ENCODE measurements at regions of chr1 and their contacts with region 1.

Region 1: GRCh38 chr1:244302889-244303613 is 148.7 kb downstream of the ADSS2 start:
- DNase-seq: no peak
- ATAC-seq: no peak
- H3K4me3 Mint-ChIP-seq: no peak overlapping the region
- H3K27ac Mint-ChIP-seq: no peak overlapping the region
- H3K4me1 Mint-ChIP-seq: peaks cover 19% of the 10 kb centered on the region
- H3K27me3 Mint-ChIP-seq: no peaks in the 10 kb centered on the region
- CTCF ChIP-seq: no peak

Region 2: DNA sequence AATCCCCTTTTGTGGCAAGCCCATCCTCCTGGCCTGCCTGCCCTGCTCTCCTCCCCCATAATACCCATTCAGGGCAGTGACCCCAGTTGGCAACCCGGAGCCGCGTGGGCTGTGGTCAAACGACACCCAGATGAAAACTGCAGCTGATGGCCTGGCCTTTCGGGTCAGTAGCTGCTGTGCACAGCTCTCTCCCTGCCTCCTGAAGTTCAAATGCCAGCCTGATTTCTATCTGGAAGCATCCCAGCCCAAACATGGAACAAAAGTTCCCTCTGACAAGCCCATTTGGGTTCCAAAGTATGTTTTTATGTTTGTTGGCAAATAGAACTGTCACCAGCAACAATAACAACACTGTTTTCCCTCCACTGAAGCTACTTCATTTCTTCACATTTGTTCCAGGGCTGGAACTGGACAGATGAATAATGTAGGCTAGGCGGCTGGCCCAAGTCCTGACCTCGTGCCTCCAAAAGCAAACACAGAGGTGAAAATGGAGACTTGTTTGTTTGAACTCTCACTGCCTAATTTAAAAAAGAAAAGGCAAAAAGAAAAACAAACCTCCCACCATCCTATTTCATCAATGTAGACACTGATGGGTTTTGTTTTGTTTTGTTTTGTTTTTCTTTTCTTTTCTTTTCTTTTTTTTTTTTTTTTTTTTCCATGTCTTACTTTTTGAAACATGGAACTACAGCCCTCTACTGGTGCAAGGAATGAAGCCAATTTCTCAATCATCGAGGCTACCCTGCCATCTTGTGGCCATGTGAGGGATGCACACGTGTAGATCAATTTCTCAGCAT is 30.4 kb before region 1 on chr1:
- CTCF ChIA-PET with region 1: interaction called, 7 read pairs
- POLR2A ChIA-PET with region 1: no interaction called
- intact Hi-C with region 1: loop called (anchors 1 kb)
- DNase-seq: peak; percentile 50
- ATAC-seq: peak; percentile 96
- H3K4me3 Mint-ChIP-seq: no peak overlapping the region
- H3K27ac Mint-ChIP-seq: no peak overlapping the region
- H3K4me1 Mint-ChIP-seq: peaks cover 21% of the 10 kb centered on the region
- H3K27me3 Mint-ChIP-seq: no peaks in the 10 kb centered on the region
- CTCF ChIP-seq: peak; percentile 92

Region 3: DNA sequence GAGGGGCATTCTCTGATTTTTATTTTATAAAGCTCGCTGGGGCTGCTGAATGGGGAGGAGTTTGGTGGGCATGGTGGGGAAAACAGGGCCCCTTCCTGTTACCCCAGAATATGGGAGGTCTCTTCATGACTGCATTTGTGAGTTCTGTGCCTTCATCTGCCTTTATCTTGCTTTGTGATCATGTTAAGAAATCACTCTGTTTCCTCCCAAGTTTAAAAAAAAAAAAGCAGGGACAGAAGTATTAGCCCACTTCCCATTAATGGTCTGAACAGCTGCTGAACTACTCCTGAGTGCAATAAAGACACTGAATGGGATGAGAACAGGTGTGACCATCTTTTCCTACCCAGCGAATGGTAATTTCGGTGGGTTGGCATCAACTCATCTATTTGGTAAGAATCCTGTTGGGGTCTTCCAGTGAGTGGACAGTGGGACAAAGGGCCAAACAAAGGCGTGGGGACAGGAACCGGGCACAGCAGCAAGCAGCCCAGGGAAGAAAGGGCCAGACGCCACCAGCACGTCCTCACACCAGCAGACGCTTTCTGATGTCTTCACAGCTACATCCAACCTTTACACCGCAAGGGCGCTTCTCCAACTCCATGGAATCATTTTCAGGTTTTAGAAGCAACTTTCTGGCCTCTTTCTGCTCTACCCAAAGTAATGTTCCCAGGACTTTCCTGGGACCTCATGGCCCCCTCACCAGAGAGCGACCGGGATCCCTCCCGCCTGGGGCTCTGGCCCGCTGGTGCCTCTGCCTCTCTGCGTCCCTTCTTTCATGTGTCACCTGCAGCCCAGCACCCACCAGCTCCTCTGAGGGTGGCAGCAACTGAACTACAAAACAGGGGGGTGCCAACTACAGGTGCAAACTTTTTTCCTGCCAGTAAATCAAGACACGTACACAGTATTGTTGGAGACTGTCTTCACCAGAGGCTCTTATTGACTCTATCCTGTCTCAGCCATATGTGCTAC is 11.5 kb before region 1 on chr1:
- CTCF ChIA-PET with region 1: no interaction called
- POLR2A ChIA-PET with region 1: no interaction called
- intact Hi-C with region 1: no loop called
- DNase-seq: no peak
- ATAC-seq: no peak
- H3K4me3 Mint-ChIP-seq: no peak overlapping the region
- H3K27ac Mint-ChIP-seq: no peak overlapping the region
- H3K4me1 Mint-ChIP-seq: no peaks in the 10 kb centered on the region
- H3K27me3 Mint-ChIP-seq: no peaks in the 10 kb centered on the region
- CTCF ChIP-seq: no peak

Region 4: GRCh38 chr1:244319283-244320132 is 16.5 kb after region 1 on chr1:
- CTCF ChIA-PET with region 1: interaction called, 8 read pairs
- POLR2A ChIA-PET with region 1: interaction called, 21 read pairs
- intact Hi-C with region 1: loop called (anchors 1 kb)
- DNase-seq: no peak
- ATAC-seq: peak; percentile 90
- H3K4me3 Mint-ChIP-seq: peak overlapping the region; percentile 46
- H3K27ac Mint-ChIP-seq: peak overlapping the region; percentile 82
- H3K4me1 Mint-ChIP-seq: peaks cover 46% of the 10 kb centered on the region
- H3K27me3 Mint-ChIP-seq: no peaks in the 10 kb centered on the region
- CTCF ChIP-seq: no peak

Region 5: GRCh38 chr1:244325056-244325764 is 22.2 kb after region 1 on chr1:
- CTCF ChIA-PET with region 1: interaction called, 8 read pairs
- POLR2A ChIA-PET with region 1: interaction called, 21 read pairs
- intact Hi-C with region 1: no loop called
- DNase-seq: no peak
- ATAC-seq: peak; percentile 89
- H3K4me3 Mint-ChIP-seq: peak overlapping the region; percentile 82
- H3K27ac Mint-ChIP-seq: peak overlapping the region; percentile 78
- H3K4me1 Mint-ChIP-seq: peaks cover 40% of the 10 kb centered on the region
- H3K27me3 Mint-ChIP-seq: no peaks in the 10 kb centered on the region
- CTCF ChIP-seq: no peak

Region 6: GRCh38 chr1:245074232-245074747 is 771.2 kb after region 1 on chr1:
- CTCF ChIA-PET with region 1: no interaction called
- POLR2A ChIA-PET with region 1: no interaction called
- intact Hi-C with region 1: no loop called
- DNase-seq: no peak
- ATAC-seq: no peak
- H3K4me3 Mint-ChIP-seq: no peak overlapping the region
- H3K27ac Mint-ChIP-seq: no peak overlapping the region
- H3K4me1 Mint-ChIP-seq: no peaks in the 10 kb centered on the region
- H3K27me3 Mint-ChIP-seq: no peaks in the 10 kb centered on the region
- CTCF ChIP-seq: no peak

Measured in activated B cell treated with CpG ODN at 0.5 μM for 24 hours (primary cell).